Activated CD4-positive, alpha-beta memory T cell treated with anti-CD3 and anti-CD28 coated beads, Interleukin-2, amount 10 ng/mL, durations not matched to agents 7 days and 5 days (primary cell): ENCODE measurements at regions of chr20 and their contacts with region 1.

Region 1: DNA sequence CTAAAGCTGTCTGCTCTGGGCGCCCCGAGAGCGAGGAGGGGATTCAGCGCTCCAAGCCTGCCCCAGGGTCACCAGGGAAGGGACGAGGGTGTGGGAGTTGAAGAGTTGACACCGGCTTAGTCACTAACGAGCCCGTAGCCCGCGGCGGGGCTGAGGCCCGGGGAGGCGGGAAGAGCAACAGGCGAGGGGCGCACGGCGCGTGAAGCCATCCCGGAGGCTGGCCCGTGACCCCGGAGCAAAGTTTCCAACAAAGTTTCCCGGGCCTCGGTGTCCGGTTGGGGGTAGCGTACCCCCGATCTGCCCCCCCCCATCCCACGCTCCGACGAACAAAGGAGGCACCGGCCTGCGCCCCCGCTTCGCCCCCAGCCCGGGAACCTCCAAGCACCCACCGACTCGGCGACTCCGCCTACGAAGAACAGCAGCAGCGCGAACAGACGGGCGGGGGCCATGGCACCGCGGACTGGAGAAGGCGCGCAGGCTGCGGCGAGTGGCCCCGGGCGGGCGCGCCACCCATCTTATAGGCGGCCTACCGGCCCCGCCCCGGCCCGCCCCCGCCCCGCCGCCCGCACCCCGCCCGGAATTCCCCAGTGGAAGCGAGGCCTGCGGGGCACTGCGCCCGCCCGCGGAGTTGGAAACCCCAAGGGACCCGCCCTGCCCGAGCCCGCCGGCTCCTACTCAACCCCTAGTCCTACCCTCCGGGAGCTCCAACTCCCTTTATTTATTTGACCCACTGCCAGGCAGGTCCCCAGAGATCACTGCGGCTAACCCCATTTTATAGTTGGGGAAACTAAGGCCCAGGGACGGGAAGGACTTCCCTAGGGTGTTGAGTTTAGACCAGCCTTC is at the start of gene SDC4:
- DNase-seq: peak; percentile 70
- H3K4me3 Mint-ChIP-seq: peak within 1 kb of the TSS; percentile 86
- H3K27ac Mint-ChIP-seq: peak within 1 kb of the TSS; percentile 67
- H3K4me1 Mint-ChIP-seq: peaks cover 48% of the 10 kb centered on the region
- H3K27me3 Mint-ChIP-seq: no peaks in the 10 kb centered on the region
- total RNA-seq, gene SDC4: 28.1 to 28.3 TPM

Region 2: DNA sequence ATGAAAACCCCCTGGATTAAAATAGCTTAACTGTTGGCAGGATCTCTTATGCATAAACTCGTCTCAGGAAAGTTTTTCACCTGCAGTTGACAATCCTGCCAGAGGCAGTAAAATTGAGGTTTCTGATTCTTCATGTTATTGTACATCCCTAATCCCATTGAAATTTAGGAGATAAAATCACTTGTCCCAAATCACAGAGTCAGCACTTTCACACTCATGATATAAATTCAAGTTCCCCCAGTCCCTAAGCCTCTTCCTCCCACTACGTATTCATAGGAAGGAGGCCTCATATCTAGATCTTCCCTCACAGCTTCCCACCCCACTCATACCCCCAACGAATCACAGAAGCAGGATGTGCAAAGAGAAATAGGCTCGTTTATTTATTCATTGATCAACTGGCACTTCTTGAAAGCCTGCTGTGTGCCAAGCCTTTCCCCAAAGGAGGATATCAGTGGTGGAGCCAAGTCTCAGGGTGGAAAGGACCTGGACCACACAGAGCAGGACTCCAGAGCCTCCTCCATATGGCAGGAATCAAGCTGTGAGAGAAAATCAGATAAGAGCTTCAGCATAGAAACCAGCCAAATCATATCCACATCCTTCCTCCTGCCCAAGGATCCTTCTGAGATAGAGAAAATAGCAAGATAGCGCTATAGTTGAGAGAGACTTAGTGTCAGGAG is 96.1 kb before region 1 on chr20:
- CTCF ChIA-PET with region 1: no interaction called
- POLR2A ChIA-PET with region 1: no interaction called
- DNase-seq: no peak
- H3K4me3 Mint-ChIP-seq: no peak overlapping the region
- H3K27ac Mint-ChIP-seq: no peak overlapping the region
- H3K4me1 Mint-ChIP-seq: peaks cover 24% of the 10 kb centered on the region
- H3K27me3 Mint-ChIP-seq: peaks cover 34% of the 10 kb centered on the region

Region 3: DNA sequence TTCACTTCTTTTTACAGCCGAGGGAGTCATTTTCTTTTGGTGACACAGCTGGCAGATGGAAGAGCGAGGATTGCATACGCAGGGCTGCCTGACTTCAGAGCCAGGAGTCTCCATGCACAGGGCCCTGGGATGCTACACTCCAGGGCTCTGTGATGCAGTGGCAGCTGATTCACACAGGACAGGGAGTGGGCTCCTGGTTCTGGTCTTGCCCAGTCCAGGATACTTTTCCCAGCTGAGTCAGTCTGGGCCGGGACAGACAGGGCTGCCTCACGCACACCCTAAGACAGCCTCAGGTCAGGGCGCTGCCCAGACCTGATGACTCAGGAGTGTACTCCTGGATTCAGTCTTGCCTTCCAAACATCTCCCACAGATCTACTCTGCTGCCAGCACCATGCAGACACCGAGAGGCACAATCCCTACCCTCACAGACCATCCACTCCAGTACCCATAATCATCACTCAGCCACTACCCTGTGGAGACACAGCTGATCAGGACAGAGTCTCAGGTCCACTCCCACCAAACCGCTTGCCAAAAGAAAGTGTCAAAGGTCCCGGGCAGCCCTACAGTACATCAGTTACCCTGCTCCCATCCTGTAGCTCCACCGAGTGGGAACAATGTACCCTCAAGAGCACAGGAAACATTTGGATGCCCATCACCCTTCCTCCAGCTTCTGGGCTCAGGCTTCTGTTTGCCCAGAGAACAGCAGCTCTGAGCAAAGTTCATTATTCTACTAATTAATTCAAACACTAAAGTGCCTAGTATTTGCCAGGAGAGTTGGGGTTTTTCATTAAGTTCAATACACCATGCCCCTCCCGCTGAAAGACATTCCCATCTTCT is 11.4 kb before region 1 on chr20:
- CTCF ChIA-PET with region 1: no interaction called
- POLR2A ChIA-PET with region 1: interaction called, 15 read pairs
- DNase-seq: no peak
- H3K4me3 Mint-ChIP-seq: no peak overlapping the region
- H3K27ac Mint-ChIP-seq: no peak overlapping the region
- H3K4me1 Mint-ChIP-seq: peaks cover 15% of the 10 kb centered on the region
- H3K27me3 Mint-ChIP-seq: no peaks in the 10 kb centered on the region

Region 4: DNA sequence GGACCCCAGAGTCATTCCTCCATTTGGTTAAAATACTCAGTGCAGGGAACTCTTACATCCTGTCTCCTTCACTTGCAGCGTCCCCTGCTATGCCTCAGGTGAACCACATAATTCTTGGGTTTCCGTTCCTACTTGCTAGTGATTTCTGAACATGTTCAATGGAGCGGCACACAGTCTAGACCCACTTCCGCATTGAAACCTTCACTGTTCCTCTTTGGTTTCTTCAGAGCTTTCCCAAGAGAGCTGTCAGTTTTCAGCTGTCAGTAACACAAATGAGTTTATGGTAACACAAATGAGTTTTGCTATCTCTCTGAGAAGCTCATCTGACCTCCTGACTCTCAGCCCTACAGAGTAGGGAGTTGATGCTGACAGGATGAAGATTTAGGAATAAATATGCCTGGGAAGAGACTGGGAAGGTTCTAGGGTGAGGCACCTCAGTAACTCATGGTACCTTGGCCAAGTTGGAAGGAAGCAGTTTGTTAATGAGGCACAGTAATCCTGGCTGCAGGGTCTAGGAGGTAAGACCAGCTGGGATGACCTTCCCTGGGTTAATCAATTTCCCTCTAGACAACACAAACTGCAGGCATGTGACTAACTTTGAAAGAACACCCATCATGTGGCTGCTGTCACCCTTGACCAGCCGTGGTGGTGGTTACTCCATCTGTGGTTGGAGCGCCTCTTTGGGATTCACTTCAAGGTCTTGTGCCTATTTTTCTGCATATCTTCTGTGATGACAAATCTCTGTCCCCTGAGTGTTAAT is 20.2 kb after region 1 on chr20:
- CTCF ChIA-PET with region 1: interaction called, 19 read pairs
- POLR2A ChIA-PET with region 1: interaction called, 25 read pairs
- DNase-seq: peak; percentile 61
- H3K4me3 Mint-ChIP-seq: peak overlapping the region; percentile 30
- H3K27ac Mint-ChIP-seq: peak overlapping the region; percentile 67
- H3K4me1 Mint-ChIP-seq: peaks cover 63% of the 10 kb centered on the region
- H3K27me3 Mint-ChIP-seq: no peaks in the 10 kb centered on the region